ENCODE measurements at regions of chr15 and their contacts with region 1.

Region 1: DNA sequence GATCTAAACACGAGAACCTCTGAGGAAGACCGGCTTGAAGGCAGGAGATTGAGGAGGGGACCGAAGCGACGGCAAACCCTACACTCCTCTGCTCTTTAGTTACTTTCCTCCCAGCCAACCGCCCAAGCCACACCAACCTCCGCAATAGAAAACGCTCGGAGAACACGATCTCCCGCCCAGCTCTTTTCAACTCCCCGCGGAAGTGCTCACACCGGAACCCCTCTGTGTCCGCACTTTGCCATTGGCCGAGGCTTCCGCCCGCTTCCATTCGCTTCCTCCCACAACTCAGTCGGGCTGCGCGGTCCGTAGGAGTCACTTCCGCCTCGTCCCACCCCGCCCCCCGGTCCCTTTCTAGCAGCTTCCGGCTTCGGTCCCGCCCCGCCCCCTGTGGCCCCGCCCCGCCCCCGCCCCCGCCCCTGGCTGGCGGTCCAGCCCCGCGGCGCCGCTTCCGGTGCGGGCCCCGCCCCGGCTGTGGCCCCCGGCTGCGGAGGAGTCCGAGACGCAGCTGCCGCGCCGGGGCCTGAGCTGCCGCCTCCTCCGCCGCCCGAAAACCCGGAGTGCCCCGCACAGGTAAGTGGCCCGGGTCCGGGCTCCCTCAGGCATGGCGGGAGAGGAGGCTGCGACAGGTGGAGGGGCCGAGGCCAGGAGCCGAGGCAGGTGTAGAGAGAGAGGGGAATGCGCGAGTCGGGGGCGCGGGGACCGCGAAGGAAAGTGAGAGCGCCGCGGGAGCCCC is at the start of gene ARID3B:
- DNase-seq: no peak
- ATAC-seq: peak; percentile 99
- H3K4me3 ChIP-seq: peak within 1 kb of the TSS; percentile 91 to 99
- H3K27ac ChIP-seq: peak within 1 kb of the TSS; percentile 96
- H3K4me1 ChIP-seq: peaks cover 28% of the 10 kb centered on the region
- H3K27me3 ChIP-seq: no peaks in the 10 kb centered on the region
- CTCF ChIP-seq: no peak
- total RNA-seq, gene ARID3B: 12.7 TPM

Region 2: GRCh38 chr15:74156678-74157411 is 384.1 kb before region 1 on chr15:
- CTCF ChIA-PET with region 1: no interaction called
- POLR2A ChIA-PET with region 1: no interaction called
- in situ Hi-C with region 1: no loop called
- intact Hi-C with region 1: no loop called
- DNase-seq: no peak
- ATAC-seq: no peak
- H3K4me3 ChIP-seq: no peak overlapping the region
- H3K27ac ChIP-seq: no peak overlapping the region
- H3K4me1 ChIP-seq: no peaks in the 10 kb centered on the region
- H3K27me3 ChIP-seq: no peaks in the 10 kb centered on the region; the same call in 1 of the 2 replicates
- CTCF ChIP-seq: no peak

Region 3: GRCh38 chr15:74382004-74382816 is 158.7 kb before region 1 on chr15:
- CTCF ChIA-PET with region 1: no interaction called
- POLR2A ChIA-PET with region 1: no interaction called
- in situ Hi-C with region 1: no loop called
- intact Hi-C with region 1: loop called (anchors 5 kb)
- DNase-seq: no peak
- ATAC-seq: peak; percentile 95
- H3K4me3 ChIP-seq: no peak overlapping the region
- H3K27ac ChIP-seq: peak overlapping the region; percentile 12; the same call in 1 of the 2 replicates
- H3K4me1 ChIP-seq: peaks cover 32% of the 10 kb centered on the region
- H3K27me3 ChIP-seq: no peaks in the 10 kb centered on the region
- CTCF ChIP-seq: peak; percentile 95

Region 4: DNA sequence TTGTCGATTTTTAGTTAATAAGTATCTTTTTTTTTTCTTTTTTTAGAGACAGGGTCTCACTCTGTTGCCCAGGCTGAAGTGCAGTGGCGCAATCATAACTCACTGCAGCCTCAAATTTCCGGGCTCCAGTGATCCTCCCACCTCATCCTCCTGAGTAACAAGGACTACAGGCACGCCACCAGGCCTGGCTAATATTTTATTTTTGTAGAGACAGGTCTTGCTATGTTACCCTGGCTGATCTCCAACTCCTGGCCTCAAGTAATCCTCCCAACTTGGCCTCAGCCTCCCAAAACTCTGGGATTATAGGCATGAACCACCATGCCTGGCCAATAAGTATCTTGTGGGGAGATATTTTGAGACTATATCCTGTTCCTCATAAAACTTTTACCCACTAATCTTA is 29.3 kb before region 1 on chr15:
- CTCF ChIA-PET with region 1: no interaction called
- POLR2A ChIA-PET with region 1: no interaction called
- in situ Hi-C with region 1: no loop called
- intact Hi-C with region 1: no loop called
- DNase-seq: no peak
- ATAC-seq: no peak
- H3K4me3 ChIP-seq: no peak overlapping the region
- H3K27ac ChIP-seq: no peak overlapping the region
- H3K4me1 ChIP-seq: no peaks in the 10 kb centered on the region
- H3K27me3 ChIP-seq: no peaks in the 10 kb centered on the region
- CTCF ChIP-seq: no peak

Region 5: DNA sequence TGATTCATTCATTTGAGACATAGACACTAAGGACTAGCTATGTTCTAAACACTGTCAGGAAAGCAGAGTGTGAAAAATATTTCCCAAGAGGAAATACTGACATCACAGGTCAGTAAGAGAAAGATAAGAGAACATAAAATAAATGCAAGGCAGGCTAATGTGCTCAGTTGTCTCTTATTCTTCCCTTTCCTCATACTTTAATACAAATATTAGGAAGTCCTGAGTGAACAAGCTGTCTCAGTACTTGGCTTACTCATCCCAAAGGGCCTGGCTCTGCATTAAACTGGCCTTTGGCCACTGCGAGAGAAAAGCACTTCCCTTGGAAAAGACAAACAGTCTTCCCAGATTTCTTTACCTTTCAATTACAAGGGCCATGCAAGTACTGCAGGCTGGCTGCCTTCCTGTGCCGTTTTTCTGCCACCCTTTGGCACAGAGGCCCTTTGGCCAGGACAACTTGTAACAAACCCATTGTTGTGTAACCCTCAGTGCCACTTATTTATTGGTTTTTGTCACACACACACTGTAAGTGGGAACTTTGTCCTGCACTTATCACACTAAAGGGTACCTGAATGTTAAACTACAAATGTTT is 123.2 kb after region 1 on chr15:
- CTCF ChIA-PET with region 1: interaction called, 10 read pairs
- POLR2A ChIA-PET with region 1: no interaction called
- in situ Hi-C with region 1: no loop called
- intact Hi-C with region 1: no loop called
- DNase-seq: no peak
- ATAC-seq: peak; percentile 51
- H3K4me3 ChIP-seq: no peak overlapping the region
- H3K27ac ChIP-seq: no peak overlapping the region
- H3K4me1 ChIP-seq: peaks cover 6% of the 10 kb centered on the region
- H3K27me3 ChIP-seq: no peaks in the 10 kb centered on the region
- CTCF ChIP-seq: no peak

Region 6: GRCh38 chr15:74816808-74817674 is 276.1 kb after region 1 on chr15:
- CTCF ChIA-PET with region 1: no interaction called
- POLR2A ChIA-PET with region 1: no interaction called
- in situ Hi-C with region 1: no loop called
- intact Hi-C with region 1: no loop called
- DNase-seq: no peak
- ATAC-seq: peak; percentile 74
- H3K4me3 ChIP-seq: no peak overlapping the region
- H3K27ac ChIP-seq: no peak overlapping the region
- H3K4me1 ChIP-seq: peaks cover 4% of the 10 kb centered on the region; the same call in 1 of the 2 replicates
- H3K27me3 ChIP-seq: no peaks in the 10 kb centered on the region
- CTCF ChIP-seq: no peak; the same call in 1 of the 2 replicates